ENCODE measurements at regions of chr3 and their contacts with region 1.

Region 1: DNA sequence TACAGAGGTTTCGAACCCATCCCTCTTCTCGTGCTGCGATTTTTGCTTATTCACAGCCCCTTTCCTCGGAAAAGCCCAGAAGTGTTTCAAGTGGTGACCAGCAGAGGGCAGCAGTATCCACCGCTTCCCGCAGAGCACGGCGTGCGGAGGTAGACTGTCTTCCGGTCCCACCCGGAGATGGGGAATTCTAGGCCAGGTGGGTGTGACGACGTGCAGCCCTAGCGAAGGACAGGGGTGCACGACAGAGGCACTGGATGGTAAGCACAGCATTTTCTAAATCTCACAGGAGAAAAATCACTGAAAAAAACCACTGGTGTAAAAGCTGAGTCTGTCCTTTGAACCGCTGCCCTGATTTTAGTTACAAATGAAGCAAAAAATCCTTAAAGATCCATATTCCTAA is 7.4 kb upstream of the PSMD6 start:
- DNase-seq: peak; percentile 83
- H3K4me3 Mint-ChIP-seq: peak overlapping the region; percentile 62
- H3K27ac Mint-ChIP-seq: peak overlapping the region; percentile 39
- H3K4me1 Mint-ChIP-seq: peaks cover 5% of the 10 kb centered on the region
- H3K27me3 Mint-ChIP-seq: peaks cover 14% of the 10 kb centered on the region

Region 2: GRCh38 chr3:64166584-64167162 is 135.9 kb after region 1 on chr3:
- CTCF ChIA-PET with region 1: no interaction called
- intact Hi-C with region 1: loop called (anchors 5 kb)
- DNase-seq: no peak
- H3K4me3 Mint-ChIP-seq: no peak overlapping the region
- H3K27ac Mint-ChIP-seq: no peak overlapping the region
- H3K4me1 Mint-ChIP-seq: no peaks in the 10 kb centered on the region
- H3K27me3 Mint-ChIP-seq: peaks cover 2% of the 10 kb centered on the region

Region 3: DNA sequence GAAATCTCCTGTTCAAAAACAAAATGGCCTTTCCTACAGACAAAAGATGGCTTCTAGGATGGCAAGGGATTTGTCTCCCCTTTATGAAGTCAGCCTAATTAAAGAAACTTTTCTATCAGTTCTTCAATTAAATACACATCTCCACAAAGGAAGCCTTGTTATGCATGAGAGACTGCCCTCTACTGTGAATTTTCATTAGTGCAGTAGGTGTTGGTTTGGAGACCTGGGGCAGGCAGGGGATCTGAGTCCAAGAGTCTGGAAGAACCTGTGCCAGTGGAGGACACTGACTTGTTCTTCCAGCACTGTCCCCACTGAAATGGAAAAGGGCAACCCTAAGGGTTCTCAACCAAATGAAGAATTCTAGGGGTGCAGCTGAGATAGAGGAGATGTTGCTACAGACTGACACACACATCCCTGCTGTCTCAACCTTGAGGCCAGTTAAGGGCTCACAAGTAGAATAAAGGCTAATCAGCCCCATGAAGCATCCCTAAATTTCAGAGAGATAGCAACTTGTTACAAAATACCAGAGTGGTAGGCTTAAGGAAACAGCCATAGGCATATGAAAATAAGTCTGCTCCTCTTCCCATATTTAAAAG is 368.6 kb after region 1 on chr3:
- CTCF ChIA-PET with region 1: interaction called, 9 read pairs
- intact Hi-C with region 1: loop called (anchors 1 kb)
- DNase-seq: peak; percentile 24
- H3K4me3 Mint-ChIP-seq: no peak overlapping the region
- H3K27ac Mint-ChIP-seq: no peak overlapping the region
- H3K4me1 Mint-ChIP-seq: no peaks in the 10 kb centered on the region
- H3K27me3 Mint-ChIP-seq: no peaks in the 10 kb centered on the region

Region 4: DNA sequence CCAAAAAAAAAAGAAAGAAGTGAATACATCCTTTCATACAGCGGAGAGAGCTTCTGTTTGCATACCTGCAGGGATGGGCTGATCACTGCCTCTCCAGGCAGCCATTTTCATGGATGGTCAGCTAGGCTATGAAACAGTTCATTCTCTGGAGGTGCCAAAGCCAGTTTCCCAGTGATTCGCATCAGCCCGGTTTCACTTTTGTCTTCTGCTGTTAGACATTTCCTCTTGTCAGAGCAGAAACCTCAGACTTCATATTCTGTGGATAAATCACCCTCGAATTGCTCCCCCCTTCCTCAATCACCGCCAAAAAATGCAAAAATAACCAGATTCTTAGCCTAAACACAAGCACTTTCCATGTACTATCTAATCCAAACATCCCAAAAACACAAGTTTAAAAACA is 431.5 kb after region 1 on chr3:
- CTCF ChIA-PET with region 1: interaction called, 16 read pairs
- intact Hi-C with region 1: loop called (anchors 1 kb)
- DNase-seq: peak; percentile 18
- H3K4me3 Mint-ChIP-seq: no peak overlapping the region
- H3K27ac Mint-ChIP-seq: no peak overlapping the region
- H3K4me1 Mint-ChIP-seq: peaks cover 2% of the 10 kb centered on the region
- H3K27me3 Mint-ChIP-seq: peaks cover 13% of the 10 kb centered on the region